Activated CD4-positive, alpha-beta memory T cell treated with anti-CD3 and anti-CD28 coated beads for 36 hours (primary cell): ENCODE measurements at regions of chr12 and their contacts with region 1.

Region 1: DNA sequence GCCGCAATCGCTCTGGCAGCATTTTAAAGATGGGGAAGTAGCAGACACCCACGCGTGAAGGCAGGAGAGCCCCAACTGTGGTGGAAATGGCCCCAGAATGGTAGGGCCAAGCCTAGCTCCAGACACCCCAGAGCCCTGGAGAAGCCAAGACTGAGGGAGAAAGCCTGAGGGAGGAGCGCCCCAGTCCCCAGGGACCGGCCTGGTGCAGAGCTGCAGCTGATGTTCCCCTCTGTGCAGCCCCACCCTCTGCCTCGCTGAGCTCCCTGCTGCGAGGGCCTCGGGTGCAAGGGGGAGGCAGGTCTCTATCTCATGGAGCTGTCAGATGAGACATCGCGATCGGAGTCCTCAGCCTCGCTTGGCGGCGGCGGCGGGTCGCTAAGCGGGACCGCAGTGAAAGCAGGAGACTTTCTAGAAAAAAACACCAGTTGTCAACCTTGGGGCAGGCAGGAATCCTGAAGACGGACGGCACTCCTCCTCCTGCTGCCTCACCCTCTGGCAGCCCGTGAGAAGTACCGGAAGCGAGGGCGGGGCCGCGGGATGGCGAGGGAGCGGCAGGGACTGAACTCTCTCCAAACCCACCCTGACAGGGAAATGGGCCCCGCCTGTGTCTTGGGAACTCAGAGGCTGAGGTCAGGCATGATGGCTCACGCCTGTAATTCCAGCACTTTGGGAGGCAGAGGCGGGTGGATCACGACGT is 6.0 kb downstream of the GAPDH start:
- DNase-seq: peak; percentile 73
- H3K4me3 Mint-ChIP-seq: peak overlapping the region; percentile 51
- H3K27ac Mint-ChIP-seq: peak overlapping the region; percentile 81
- H3K4me1 Mint-ChIP-seq: peaks cover 58% of the 10 kb centered on the region
- H3K27me3 Mint-ChIP-seq: no peaks in the 10 kb centered on the region

Region 2: GRCh38 chr12:6074979-6075585 is 465.2 kb before region 1 on chr12:
- CTCF ChIA-PET with region 1: no interaction called
- POLR2A ChIA-PET with region 1: no interaction called
- intact Hi-C with region 1: loop called (anchors 5 kb)
- DNase-seq: peak; percentile 69
- H3K4me3 Mint-ChIP-seq: peak overlapping the region; percentile 48
- H3K27ac Mint-ChIP-seq: no peak overlapping the region
- H3K4me1 Mint-ChIP-seq: peaks cover 22% of the 10 kb centered on the region
- H3K27me3 Mint-ChIP-seq: peaks cover 24% of the 10 kb centered on the region

Region 3: DNA sequence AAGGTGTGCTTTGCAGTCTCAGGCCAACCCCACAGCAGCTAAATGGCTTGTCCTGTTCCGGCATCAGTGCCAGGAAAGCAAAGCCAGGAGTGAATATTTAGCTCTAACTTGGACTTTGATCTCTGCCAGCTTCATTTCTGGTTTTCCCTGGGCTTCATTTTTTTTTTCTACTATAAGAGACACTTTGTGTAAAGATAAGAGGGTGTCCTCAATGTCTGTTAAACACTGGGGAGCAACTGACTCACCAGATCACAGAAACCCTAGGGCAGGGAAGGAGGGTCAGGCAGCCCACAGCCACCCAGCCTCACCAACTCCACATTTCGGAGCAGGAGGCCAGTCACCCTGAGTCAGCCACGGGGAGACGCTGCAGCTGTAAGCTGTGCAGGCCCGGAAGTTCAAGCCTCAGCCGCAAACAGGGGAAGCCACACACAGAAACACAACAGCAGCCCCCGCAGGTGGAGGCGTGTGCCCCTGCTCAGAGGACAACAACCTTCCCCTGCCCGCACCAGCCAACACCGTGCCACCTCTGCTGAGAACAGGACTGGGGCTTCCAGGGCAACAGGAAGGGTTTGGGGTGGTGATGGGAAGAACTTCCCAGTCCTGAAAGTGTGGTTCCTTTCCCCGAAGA is 204.8 kb before region 1 on chr12:
- CTCF ChIA-PET with region 1: interaction called, 10 read pairs
- POLR2A ChIA-PET with region 1: interaction called, 7 read pairs
- intact Hi-C with region 1: loop called (anchors 2 kb)
- DNase-seq: peak; percentile 94
- H3K4me3 Mint-ChIP-seq: no peak overlapping the region
- H3K27ac Mint-ChIP-seq: no peak overlapping the region
- H3K4me1 Mint-ChIP-seq: peaks cover 20% of the 10 kb centered on the region
- H3K27me3 Mint-ChIP-seq: no peaks in the 10 kb centered on the region

Region 4: GRCh38 chr12:6528887-6529235 is 11.5 kb before region 1 on chr12:
- CTCF ChIA-PET with region 1: interaction called, 10 read pairs
- POLR2A ChIA-PET with region 1: interaction called, 9 read pairs
- intact Hi-C with region 1: no loop called
- DNase-seq: no peak
- H3K4me3 Mint-ChIP-seq: no peak overlapping the region
- H3K27ac Mint-ChIP-seq: no peak overlapping the region
- H3K4me1 Mint-ChIP-seq: peaks cover 19% of the 10 kb centered on the region
- H3K27me3 Mint-ChIP-seq: no peaks in the 10 kb centered on the region

Region 5: GRCh38 chr12:6554168-6555017 is 14.1 kb after region 1 on chr12:
- CTCF ChIA-PET with region 1: interaction called, 52 read pairs
- POLR2A ChIA-PET with region 1: interaction called, 54 read pairs
- intact Hi-C with region 1: loop called (anchors 1 kb)
- DNase-seq: peak; percentile 86
- H3K4me3 Mint-ChIP-seq: peak overlapping the region; percentile 85
- H3K27ac Mint-ChIP-seq: peak overlapping the region; percentile 60
- H3K4me1 Mint-ChIP-seq: peaks cover 38% of the 10 kb centered on the region
- H3K27me3 Mint-ChIP-seq: no peaks in the 10 kb centered on the region

Region 6: DNA sequence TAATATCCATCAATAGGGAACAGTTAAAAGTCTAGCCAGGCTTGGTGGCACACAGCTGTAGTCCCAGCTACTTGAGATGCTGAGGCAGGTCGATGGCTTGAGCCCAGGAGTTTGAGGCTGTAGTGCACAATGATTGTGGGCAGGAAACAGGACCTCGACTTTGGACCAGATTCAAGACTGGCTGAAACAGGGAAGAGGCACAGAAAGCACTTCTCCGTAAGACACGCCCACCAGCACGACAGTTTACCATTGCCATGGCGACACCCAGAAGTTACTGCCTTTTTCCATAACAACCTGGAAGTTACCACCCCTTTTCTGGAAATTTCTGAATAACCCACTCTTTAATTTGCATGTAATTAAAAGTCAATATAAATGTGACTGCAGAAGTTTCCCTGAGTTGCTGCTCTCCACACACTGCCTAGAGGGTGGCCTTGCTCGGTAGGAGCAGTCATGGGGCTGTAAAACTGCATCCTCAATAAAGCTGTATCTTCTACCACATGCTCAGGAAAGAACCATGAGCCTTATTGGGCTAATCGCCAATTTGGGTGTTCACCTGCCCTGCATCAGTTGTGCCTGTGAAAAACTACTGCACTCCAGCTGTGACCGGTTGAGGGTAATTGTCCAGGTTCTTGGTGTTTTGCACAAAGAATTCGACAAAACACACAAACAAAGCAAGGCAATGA is 359.6 kb after region 1 on chr12:
- CTCF ChIA-PET with region 1: no interaction called
- POLR2A ChIA-PET with region 1: no interaction called
- intact Hi-C with region 1: no loop called
- DNase-seq: peak; percentile 47
- H3K4me3 Mint-ChIP-seq: no peak overlapping the region
- H3K27ac Mint-ChIP-seq: no peak overlapping the region
- H3K4me1 Mint-ChIP-seq: peaks cover 7% of the 10 kb centered on the region
- H3K27me3 Mint-ChIP-seq: no peaks in the 10 kb centered on the region